Dorsolateral prefrontal cortex (tissue), 120 donors: ENCODE measurements at regions of chr3 and their contacts with region 1.

Region 1: GRCh38 chr3:83902842-83903533 is 1055.8 kb upstream of the CADM2 start:
- DNase-seq: no peak
- H3K4me3 ChIP-seq: no peak overlapping the region
- H3K27ac ChIP-seq: no peak overlapping the region
- H3K27me3 ChIP-seq: no peaks in the 10 kb centered on the region
- CTCF ChIP-seq: no peak

Region 2: DNA sequence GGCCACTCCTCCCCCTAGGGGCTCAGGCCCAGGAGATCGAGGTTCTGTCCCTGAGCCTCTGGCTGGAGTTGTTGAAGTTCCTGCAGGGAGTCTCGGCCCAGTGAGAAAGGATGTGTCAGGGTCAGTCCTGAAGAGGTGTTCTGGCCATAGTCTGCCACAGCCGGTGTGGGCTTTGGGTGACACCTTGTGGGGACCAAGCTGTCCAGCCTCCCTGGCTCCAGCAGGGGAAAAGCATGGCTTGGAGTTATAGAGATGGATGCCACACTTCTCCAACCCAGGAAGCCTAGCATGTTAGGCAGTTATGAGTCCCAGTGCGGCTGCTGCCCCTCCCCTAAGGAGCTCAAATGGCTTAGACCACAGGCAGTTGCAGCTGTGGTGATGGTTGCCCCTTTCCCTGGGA is 1196.0 kb before region 1 on chr3:
- intact Hi-C with region 1: loop called in 1 of 2 experiments (anchors 5 kb)
- DNase-seq: peak in 1 of 10 donors; percentile 32
- H3K4me3 ChIP-seq: no peak overlapping the region
- H3K27ac ChIP-seq: no peak overlapping the region
- H3K27me3 ChIP-seq: no peaks in the 10 kb centered on the region
- CTCF ChIP-seq: no peak

Region 3: DNA sequence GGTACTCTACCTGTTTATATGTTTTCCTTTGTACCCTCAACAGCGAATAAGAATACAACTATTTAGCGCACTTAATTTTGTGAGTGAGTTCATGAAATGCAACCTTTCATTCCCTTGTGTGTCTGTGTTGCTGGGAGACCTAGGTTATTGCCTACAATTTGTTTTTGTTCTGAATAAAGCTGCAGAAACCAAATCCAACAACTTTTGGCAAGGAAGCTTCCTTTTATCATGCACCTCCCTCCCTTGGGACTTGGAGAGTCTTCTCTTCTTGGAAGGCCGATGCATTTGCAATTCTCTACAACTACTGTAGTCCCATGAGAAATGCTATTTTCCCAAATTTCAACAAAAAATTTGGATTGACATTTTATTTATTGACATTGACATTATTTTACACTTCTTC is 53.4 kb after region 1 on chr3:
- intact Hi-C with region 1: no loop called
- DNase-seq: no peak
- H3K4me3 ChIP-seq: no peak overlapping the region
- H3K27ac ChIP-seq: no peak overlapping the region
- H3K27me3 ChIP-seq: no peaks in the 10 kb centered on the region
- CTCF ChIP-seq: no peak

Region 4: DNA sequence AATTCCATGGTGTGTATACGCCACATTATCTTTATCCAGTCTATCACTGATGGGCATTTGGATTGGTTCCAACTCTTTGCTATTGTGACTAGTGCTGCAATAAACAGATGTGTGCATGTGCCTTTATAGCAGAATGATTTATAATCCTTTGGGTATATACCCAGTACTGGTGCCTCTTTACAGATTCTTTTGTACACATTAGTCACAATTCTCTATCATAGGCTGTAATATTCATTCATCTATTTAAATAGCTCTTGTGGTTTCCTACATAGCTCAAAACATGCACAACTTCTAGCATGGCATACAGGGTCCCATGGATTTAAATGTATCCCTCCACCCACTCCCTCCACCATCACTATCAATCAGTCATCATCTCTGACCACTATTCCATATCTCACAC is 731.7 kb after region 1 on chr3:
- intact Hi-C with region 1: no loop called
- DNase-seq: no peak
- H3K4me3 ChIP-seq: no peak overlapping the region
- H3K27ac ChIP-seq: no peak overlapping the region
- H3K27me3 ChIP-seq: no peaks in the 10 kb centered on the region
- CTCF ChIP-seq: no peak